CD4-positive, alpha-beta memory T cell (primary cell): ENCODE measurements at regions of chr5 and their contacts with region 1.

Region 1: DNA sequence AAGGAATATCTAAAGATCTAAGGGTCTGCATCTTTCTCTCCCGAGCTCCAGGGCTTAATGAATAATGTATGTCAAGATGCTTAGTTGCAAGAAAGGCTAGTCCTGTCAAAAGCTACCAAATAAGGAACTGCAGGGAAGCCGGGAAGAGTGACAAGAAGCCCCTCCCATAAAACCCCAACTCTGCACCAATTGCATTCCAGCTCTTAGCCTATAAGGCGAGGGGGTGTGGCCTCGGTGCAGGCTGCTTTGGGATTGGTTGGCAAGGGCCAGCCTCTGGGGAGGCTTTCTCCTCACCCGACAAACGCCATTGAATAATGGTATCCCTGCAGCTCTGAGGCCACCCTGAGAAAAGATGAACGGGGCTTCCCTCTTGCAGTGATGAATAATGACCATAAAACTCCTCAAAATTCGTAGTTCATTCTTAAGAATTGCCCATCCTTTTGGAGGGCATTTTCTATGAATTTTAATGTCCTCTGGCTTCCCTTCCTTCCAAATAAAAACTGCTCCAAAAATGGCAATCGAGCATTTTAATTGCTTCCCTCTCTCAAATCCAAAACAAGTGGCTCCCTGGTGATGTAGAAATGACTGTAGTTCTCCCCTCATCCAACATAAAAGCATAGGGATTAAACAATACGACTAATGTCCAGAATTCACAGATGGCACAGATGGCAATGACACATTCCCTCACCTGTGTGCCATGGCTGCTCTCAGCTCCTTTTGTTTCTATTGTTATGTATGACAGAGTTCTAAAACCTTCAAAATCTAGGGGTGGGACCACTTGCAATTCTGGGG is 417.1 kb downstream of the RAB3C start:
- DNase-seq: no peak
- H3K4me3 ChIP-seq: no peak overlapping the region
- H3K4me3 Mint-ChIP-seq: peak overlapping the region in 2 of 8 donors; percentile 20 to 48
- H3K27ac ChIP-seq: no peak overlapping the region
- H3K27ac Mint-ChIP-seq: peak overlapping the region in 2 of 7 donors; percentile 74 to 77
- H3K4me1 ChIP-seq: peaks cover 13% of the 10 kb centered on the region
- H3K4me1 Mint-ChIP-seq: peaks cover 30 to 68% (median 43%) of the 10 kb centered on the region in 4 donors
- H3K27me3 ChIP-seq: no peaks in the 10 kb centered on the region
- H3K27me3 Mint-ChIP-seq: no peaks in the 10 kb centered on the region

Region 2: GRCh38 chr5:58182287-58182841 is 817.6 kb before region 1 on chr5:
- CTCF ChIA-PET with region 1: no interaction called
- POLR2A ChIA-PET with region 1: no interaction called
- intact Hi-C with region 1: no loop called
- DNase-seq: no peak
- H3K4me3 ChIP-seq: no peak overlapping the region
- H3K4me3 Mint-ChIP-seq: no peak overlapping the region
- H3K27ac ChIP-seq: no peak overlapping the region
- H3K27ac Mint-ChIP-seq: no peak overlapping the region
- H3K4me1 ChIP-seq: no peaks in the 10 kb centered on the region
- H3K4me1 Mint-ChIP-seq: no peaks in the 10 kb centered on the region
- H3K27me3 ChIP-seq: no peaks in the 10 kb centered on the region
- H3K27me3 Mint-ChIP-seq: peaks cover 0 to 3% of the 10 kb centered on the region in 2 donors

Region 3: GRCh38 chr5:58961631-58962280 is 38.2 kb before region 1 on chr5:
- CTCF ChIA-PET with region 1: no interaction called
- POLR2A ChIA-PET with region 1: no interaction called
- intact Hi-C with region 1: no loop called
- DNase-seq: no peak
- H3K4me3 ChIP-seq: no peak overlapping the region
- H3K4me3 Mint-ChIP-seq: no peak overlapping the region
- H3K27ac ChIP-seq: no peak overlapping the region
- H3K27ac Mint-ChIP-seq: no peak overlapping the region
- H3K4me1 ChIP-seq: no peaks in the 10 kb centered on the region
- H3K4me1 Mint-ChIP-seq: no peaks in the 10 kb centered on the region
- H3K27me3 ChIP-seq: no peaks in the 10 kb centered on the region
- H3K27me3 Mint-ChIP-seq: peaks cover 0 to 2% of the 10 kb centered on the region in 2 donors

Region 4: GRCh38 chr5:58980890-58981289 is 19.1 kb before region 1 on chr5:
- CTCF ChIA-PET with region 1: interaction called, 4 read pairs
- POLR2A ChIA-PET with region 1: no interaction called
- intact Hi-C with region 1: loop called (anchors 1 kb)
- DNase-seq: no peak
- H3K4me3 ChIP-seq: no peak overlapping the region
- H3K4me3 Mint-ChIP-seq: no peak overlapping the region
- H3K27ac ChIP-seq: no peak overlapping the region
- H3K27ac Mint-ChIP-seq: peak overlapping the region in 3 of 7 donors; percentile 4 to 51 (median 9)
- H3K4me1 ChIP-seq: no peaks in the 10 kb centered on the region
- H3K4me1 Mint-ChIP-seq: peaks cover 0 to 4% (median 0%) of the 10 kb centered on the region in 4 donors
- H3K27me3 ChIP-seq: no peaks in the 10 kb centered on the region
- H3K27me3 Mint-ChIP-seq: no peaks in the 10 kb centered on the region